Posterior vena cava (tissue), 2 donors: ENCODE measurements at regions of chr10 and their contacts with region 1.

Region 1: GRCh38 chr10:110317866-110318850 is 13.4 kb upstream of the SMNDC1 start:
- DNase-seq: no peak

Region 2: DNA sequence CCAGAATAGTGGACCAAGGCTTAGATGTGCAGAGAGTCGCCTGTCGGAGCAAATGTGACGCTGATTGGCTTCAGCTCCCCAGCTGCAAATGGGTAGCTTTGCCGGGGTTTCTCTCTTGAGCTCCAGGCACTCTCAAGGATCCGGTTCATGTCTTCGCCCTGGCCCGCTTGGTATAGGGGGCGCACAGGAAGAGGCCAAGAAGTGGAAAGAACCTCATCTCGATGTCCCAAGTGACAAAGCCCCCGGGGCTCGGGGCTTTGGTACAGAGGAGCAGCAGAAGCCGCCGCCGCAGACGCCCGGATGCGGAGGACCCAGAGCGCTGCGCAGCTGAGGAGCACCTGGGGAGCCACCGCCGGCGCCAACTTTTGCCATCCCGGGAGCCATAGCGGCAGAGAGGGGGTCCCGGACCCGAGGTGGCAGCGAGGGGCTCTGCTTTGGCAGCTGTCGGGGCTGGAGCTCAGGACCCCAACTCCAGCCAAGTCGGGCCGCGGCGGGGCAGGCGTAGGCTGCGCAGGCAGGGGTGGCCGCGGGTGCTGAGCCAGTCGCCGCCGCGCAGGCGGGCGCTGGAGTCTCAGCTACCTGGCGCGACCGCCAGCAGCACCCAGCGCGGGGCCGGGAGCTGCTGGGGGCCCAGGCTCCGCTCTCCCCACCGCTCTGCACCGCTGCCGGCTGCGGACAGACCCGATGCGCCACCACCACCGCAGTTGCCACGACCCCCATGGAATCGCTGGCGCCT is 861.4 kb before region 1 on chr10:
- intact Hi-C with region 1: no loop called
- DNase-seq: peak; percentile 78

Region 3: GRCh38 chr10:110391536-110391935 is 73.4 kb after region 1 on chr10:
- intact Hi-C with region 1: loop called in 1 of 2 experiments (anchors 1 kb)
- DNase-seq: no peak

Region 4: GRCh38 chr10:110610308-110610774 is 292.2 kb after region 1 on chr10:
- intact Hi-C with region 1: no loop called
- DNase-seq: no peak